ENCODE measurements at regions of chr19 and their contacts with region 1.

Region 1: DNA sequence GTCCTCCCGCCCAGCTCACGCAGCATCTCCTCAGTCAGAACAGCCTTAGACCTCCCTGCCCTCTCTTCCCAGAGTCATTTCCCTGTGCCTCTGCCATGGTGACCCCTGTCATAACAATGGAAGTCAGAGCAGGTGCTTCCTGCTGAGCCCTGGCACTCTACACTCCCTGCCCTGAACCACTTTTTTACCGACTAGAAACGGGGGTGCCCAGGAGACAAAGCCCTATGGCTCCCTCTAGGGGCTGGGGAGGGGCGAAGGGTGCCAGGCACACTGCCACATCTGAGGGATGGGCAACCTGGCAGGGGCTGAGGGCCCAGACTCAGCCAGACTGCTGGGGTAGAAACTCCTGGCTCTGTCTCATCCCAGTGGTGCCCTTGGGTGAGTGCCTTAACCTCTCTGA is 16.4 kb downstream of the ZNF574 start:
- DNase-seq: peak; percentile 41
- H3K4me3 ChIP-seq: no peak overlapping the region
- H3K27ac ChIP-seq: no peak overlapping the region
- H3K4me1 ChIP-seq: peaks cover 17% of the 10 kb centered on the region
- H3K27me3 ChIP-seq: no peaks in the 10 kb centered on the region
- CTCF ChIP-seq: peak; percentile 57 to 86

Region 2: GRCh38 chr19:41837981-41838708 is 254.2 kb before region 1 on chr19:
- CTCF ChIA-PET with region 1: no interaction called
- dilution Hi-C with region 1: no loop called
- in situ Hi-C with region 1: no loop called
- intact Hi-C with region 1: no loop called
- DNase-seq: no peak
- H3K4me3 ChIP-seq: no peak overlapping the region
- H3K27ac ChIP-seq: no peak overlapping the region
- H3K4me1 ChIP-seq: no peaks in the 10 kb centered on the region
- H3K27me3 ChIP-seq: peaks cover 13% of the 10 kb centered on the region
- CTCF ChIP-seq: no peak

Region 3: GRCh38 chr19:41998246-41999020 is 93.9 kb before region 1 on chr19:
- CTCF ChIA-PET with region 1: no interaction called
- dilution Hi-C with region 1: no loop called
- in situ Hi-C with region 1: no loop called
- intact Hi-C with region 1: loop called (anchors 1 kb)
- DNase-seq: no peak
- H3K4me3 ChIP-seq: no peak overlapping the region
- H3K27ac ChIP-seq: no peak overlapping the region
- H3K4me1 ChIP-seq: peaks cover 6% of the 10 kb centered on the region
- H3K27me3 ChIP-seq: peaks cover 11% of the 10 kb centered on the region
- CTCF ChIP-seq: peak; percentile 38 to 71

Region 4: DNA sequence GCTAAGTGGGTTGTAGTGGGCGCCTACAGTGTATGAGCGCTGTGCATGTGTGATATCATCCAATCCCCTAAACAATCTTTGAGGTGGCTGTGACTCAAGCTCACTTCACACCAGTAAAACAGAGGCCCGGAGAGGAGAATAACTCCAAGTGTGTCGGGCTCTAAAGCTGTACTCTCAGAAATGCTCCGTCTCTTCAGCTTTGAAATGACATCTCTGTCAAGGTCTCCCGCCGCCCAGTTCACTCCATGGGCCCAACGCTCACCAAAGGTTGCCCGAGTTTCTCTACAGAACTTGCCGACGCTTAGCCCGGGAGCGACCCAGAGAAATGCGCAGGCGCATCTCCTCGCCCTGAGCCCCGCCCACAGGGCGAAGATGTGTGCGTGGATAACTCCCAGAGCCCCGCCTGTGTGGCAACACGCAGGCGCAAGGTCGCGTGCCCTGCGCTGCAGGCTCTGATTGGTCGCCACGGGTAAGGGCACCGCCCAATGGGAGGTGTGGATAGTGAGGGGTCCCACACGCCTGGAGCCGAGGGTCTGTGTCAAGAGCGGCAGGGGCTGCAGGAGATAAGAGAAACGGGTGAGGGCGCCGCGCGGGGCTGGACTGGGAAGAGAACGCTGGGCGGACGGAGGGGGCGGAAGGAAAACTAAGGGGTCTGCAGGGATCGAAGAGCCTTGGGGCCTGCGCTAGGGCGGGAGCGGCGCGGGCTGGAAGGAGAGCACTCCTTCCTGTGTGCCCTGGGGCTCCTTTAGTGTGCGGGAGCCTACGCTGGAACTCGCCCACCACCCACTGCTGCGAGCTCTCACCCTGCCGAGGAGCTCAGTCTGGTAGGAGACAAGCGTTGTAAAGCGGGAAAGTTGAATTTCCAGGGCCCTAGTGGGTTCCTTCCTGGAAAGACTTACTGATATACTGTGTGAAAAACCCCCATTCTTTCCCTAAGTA is 127.7 kb after region 1 on chr19 and contains the start of gene ZNF526:
- CTCF ChIA-PET with region 1: no interaction called
- dilution Hi-C with region 1: no loop called
- in situ Hi-C with region 1: no loop called
- intact Hi-C with region 1: no loop called
- DNase-seq: peak; percentile 96
- H3K4me3 ChIP-seq: peak within 1 kb of the TSS; percentile 80 to 95 (median 85)
- H3K27ac ChIP-seq: peak within 1 kb of the TSS; percentile 65
- H3K4me1 ChIP-seq: peaks cover 27% of the 10 kb centered on the region
- H3K27me3 ChIP-seq: no peaks in the 10 kb centered on the region
- CTCF ChIP-seq: no peak
- total RNA-seq, gene ZNF526: 11.2 to 15.8 TPM